HepG2 (cell line): ENCODE measurements at regions of chr2 and their contacts with region 1.

Region 1: DNA sequence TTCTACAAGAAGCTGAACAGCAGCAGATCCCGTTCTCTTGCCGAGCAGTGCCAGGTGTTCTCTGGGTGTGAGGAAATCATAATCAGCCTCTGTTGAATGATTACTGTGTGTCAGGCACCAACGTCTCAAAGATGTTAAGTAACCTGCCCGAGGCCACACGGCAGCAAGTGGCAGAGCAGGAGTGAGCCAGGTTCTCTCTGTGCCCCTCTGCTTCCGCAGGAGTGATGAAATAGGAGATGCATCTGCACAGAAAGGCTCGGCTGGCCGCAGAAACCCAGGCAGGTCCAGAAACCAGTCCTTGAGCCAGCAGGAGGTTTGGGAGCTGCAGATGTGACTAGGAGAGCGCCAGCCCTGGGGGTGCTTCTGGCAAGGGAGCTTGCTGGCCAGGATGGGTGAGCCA is 68.4 kb downstream of the COPS7B start:
- DNase-seq: no peak
- ATAC-seq: no peak; the same call in 2 of the 3 replicates
- H3K4me3 ChIP-seq: no peak overlapping the region
- H3K27ac ChIP-seq: no peak overlapping the region
- H3K4me1 ChIP-seq: no peaks in the 10 kb centered on the region
- H3K27me3 ChIP-seq: peaks cover 3 to 50% of the 10 kb centered on the region in 2 experiments
- CTCF ChIP-seq: no peak
- EP300 ChIP-seq: no peak
- POLR2A ChIP-seq: no peak
- RAD21 ChIP-seq: no peak

Region 2: GRCh38 chr2:232438951-232439757 is 584.5 kb after region 1 on chr2:
- CTCF ChIA-PET with region 1: interaction called, 5 read pairs
- POLR2A ChIA-PET with region 1: no interaction called
- in situ Hi-C with region 1: no loop called
- intact Hi-C with region 1: loop called (anchors 2 kb)
- DNase-seq: no peak
- ATAC-seq: peak; percentile 51
- H3K4me3 ChIP-seq: no peak overlapping the region
- H3K27ac ChIP-seq: no peak overlapping the region
- H3K4me1 ChIP-seq: peaks cover 12% of the 10 kb centered on the region
- H3K27me3 ChIP-seq: peaks cover 23 to 44% of the 10 kb centered on the region in 2 experiments
- CTCF ChIP-seq: peak; percentile 45
- EP300 ChIP-seq: no peak
- POLR2A ChIP-seq: no peak
- RAD21 ChIP-seq: no peak